ENCODE measurements at regions of chr11 and their contacts with region 1.

Region 1: GRCh38 chr11:14258221-14258935 is 100.6 kb downstream of the RRAS2 start:
- DNase-seq: no peak
- H3K4me3 ChIP-seq: no peak overlapping the region
- H3K4me3 Mint-ChIP-seq: no peak overlapping the region
- H3K27ac ChIP-seq: no peak overlapping the region
- H3K27ac Mint-ChIP-seq: no peak overlapping the region
- H3K4me1 ChIP-seq: no peaks in the 10 kb centered on the region
- H3K4me1 Mint-ChIP-seq: no peaks in the 10 kb centered on the region
- H3K27me3 ChIP-seq: no peaks in the 10 kb centered on the region
- H3K27me3 Mint-ChIP-seq: peaks cover 19 to 26% (median 20%) of the 10 kb centered on the region in 3 donors
- CTCF ChIP-seq: no peak

Region 2: GRCh38 chr11:13169709-13170108 is 1088.7 kb before region 1 on chr11:
- intact Hi-C with region 1: no loop called
- DNase-seq: no peak
- H3K4me3 ChIP-seq: no peak overlapping the region
- H3K4me3 Mint-ChIP-seq: no peak overlapping the region
- H3K27ac ChIP-seq: no peak overlapping the region
- H3K27ac Mint-ChIP-seq: no peak overlapping the region
- H3K4me1 ChIP-seq: no peaks in the 10 kb centered on the region
- H3K4me1 Mint-ChIP-seq: no peaks in the 10 kb centered on the region
- H3K27me3 ChIP-seq: peaks cover 0 to 2% of the 10 kb centered on the region in 2 donors
- H3K27me3 Mint-ChIP-seq: peaks cover 0 to 4% (median 3%) of the 10 kb centered on the region in 3 donors
- CTCF ChIP-seq: no peak

Region 3: GRCh38 chr11:13772223-13773046 is 485.9 kb before region 1 on chr11:
- intact Hi-C with region 1: loop called in 1 of 2 experiments (anchors 10 kb)
- DNase-seq: peak; percentile 3 to 19 (median 10)
- H3K4me3 ChIP-seq: no peak overlapping the region
- H3K4me3 Mint-ChIP-seq: no peak overlapping the region
- H3K27ac ChIP-seq: no peak overlapping the region
- H3K27ac Mint-ChIP-seq: no peak overlapping the region
- H3K4me1 ChIP-seq: no peaks in the 10 kb centered on the region
- H3K4me1 Mint-ChIP-seq: no peaks in the 10 kb centered on the region
- H3K27me3 ChIP-seq: peaks cover 2% of the 10 kb centered on the region in 2 donors
- H3K27me3 Mint-ChIP-seq: peaks cover 1 to 8% (median 6%) of the 10 kb centered on the region in 3 donors
- CTCF ChIP-seq: peak; percentile 55

Region 4: DNA sequence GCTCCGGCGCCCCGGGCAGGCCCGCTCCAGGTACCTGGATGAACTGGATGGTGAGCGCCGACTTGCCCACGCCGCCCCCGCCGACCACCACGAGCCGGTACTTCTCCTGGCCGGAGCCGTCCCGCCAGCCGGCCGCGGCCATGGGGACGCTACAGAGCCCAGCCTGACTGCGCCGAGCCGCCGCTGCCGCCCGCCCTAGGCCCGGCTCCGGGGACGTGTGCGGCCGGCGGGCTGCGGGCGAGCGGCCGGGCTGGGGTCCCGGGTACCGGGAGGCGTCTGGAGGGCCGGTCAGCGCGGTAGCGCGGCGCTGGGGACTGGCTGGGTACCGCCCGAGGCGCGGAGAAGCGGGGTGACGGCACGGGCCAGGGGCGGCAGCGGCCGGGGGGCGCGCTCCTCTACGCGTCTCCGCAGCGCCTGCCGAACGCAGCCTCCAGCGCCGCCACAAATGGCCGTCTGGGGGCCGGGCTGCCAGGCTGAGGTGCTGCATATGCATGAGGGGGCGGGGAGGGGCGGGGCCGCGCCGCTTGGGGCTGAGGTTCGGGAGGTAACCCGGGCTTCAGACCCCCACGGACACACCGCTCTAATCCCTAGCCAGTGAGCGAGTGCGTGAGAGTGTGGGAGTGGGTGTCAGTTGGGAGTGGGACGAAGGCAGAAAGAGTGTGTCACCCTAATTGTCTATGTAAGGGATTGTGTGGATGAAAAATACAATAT is 100.5 kb after region 1 on chr11 and contains the start of gene RRAS2:
- intact Hi-C with region 1: no loop called
- DNase-seq: peak in 1 of 3 donors; percentile 17
- H3K4me3 ChIP-seq: peak within 1 kb of the TSS in 2 of 3 experiments; percentile 28 to 56
- H3K4me3 Mint-ChIP-seq: peak within 1 kb of the TSS; percentile 70 to 89
- H3K27ac ChIP-seq: no peak within 1 kb of the TSS
- H3K27ac Mint-ChIP-seq: peak within 1 kb of the TSS in 2 of 7 donors; percentile 15 to 70
- H3K4me1 ChIP-seq: peaks cover 5 to 13% of the 10 kb centered on the region in 2 donors
- H3K4me1 Mint-ChIP-seq: peaks cover 8% of the 10 kb centered on the region
- H3K27me3 ChIP-seq: peaks cover 38 to 46% of the 10 kb centered on the region in 2 donors
- H3K27me3 Mint-ChIP-seq: peaks cover 48 to 71% (median 56%) of the 10 kb centered on the region in 3 donors
- CTCF ChIP-seq: no peak
- polyA plus RNA-seq, gene RRAS2: 0.19 to 0.31 TPM in 2 of 3 donors, not detected in the other